ENCODE measurements at regions of chr2 and their contacts with region 1.

Region 1: DNA sequence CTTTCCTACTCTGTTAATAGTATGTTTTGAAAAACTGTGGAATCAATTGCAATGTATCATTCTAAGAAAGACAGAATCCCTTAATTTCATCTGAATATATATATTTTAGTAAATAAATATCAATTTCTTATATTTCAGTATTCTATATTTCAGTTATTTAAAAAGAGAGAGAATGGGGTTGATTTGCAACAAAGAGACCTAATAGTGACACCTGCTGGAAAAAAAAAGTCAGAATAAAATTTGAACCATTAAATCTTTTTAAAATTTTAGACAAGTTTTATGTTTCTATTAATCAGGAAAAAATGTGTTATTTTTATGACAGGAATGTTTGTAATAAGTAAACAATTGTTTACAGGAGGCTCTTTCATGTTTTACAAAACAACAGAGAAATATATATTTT is 20.7 kb upstream of the CCNT2 start:
- DNase-seq: no peak
- ATAC-seq: no peak
- H3K4me3 ChIP-seq: no peak overlapping the region
- H3K27ac ChIP-seq: no peak overlapping the region
- H3K4me1 ChIP-seq: no peaks in the 10 kb centered on the region
- H3K27me3 ChIP-seq: no peaks in the 10 kb centered on the region

Region 2: GRCh38 chr2:134457765-134458472 is 440.0 kb before region 1 on chr2:
- intact Hi-C with region 1: loop called in 1 of 2 experiments (anchors 10 kb)
- DNase-seq: peak in 1 of 2 donors; percentile 9
- ATAC-seq: no peak
- H3K4me3 ChIP-seq: no peak overlapping the region
- H3K27ac ChIP-seq: no peak overlapping the region
- H3K4me1 ChIP-seq: no peaks in the 10 kb centered on the region
- H3K27me3 ChIP-seq: no peaks in the 10 kb centered on the region

Region 3: GRCh38 chr2:134943540-134943939 is 45.6 kb after region 1 on chr2:
- intact Hi-C with region 1: no loop called
- DNase-seq: no peak
- ATAC-seq: no peak
- H3K4me3 ChIP-seq: no peak overlapping the region
- H3K27ac ChIP-seq: no peak overlapping the region
- H3K4me1 ChIP-seq: peaks cover 0 to 1% of the 10 kb centered on the region in 2 donors
- H3K27me3 ChIP-seq: no peaks in the 10 kb centered on the region

Region 4: GRCh38 chr2:134988994-134989605 is 91.2 kb after region 1 on chr2:
- intact Hi-C with region 1: no loop called
- DNase-seq: no peak
- ATAC-seq: no peak
- H3K4me3 ChIP-seq: no peak overlapping the region
- H3K27ac ChIP-seq: no peak overlapping the region
- H3K4me1 ChIP-seq: no peaks in the 10 kb centered on the region
- H3K27me3 ChIP-seq: no peaks in the 10 kb centered on the region

Region 5: DNA sequence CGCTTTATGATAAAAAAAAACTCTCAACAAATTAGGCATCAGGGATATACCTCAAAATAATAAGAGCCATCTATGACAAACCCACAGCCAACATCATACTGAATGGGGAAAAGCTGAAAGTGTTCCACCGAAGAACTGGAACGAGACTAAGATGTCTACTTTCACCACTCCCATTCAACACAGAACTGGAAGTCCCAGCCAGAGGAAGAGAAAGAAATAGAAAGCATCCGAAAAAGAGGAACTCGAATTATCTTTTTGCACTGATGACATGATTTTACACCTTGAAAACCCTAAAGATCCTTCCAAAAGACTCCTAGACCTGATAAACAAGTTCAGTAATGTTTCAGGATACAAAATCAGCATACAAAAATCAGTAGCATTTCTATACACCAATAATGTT is 511.5 kb after region 1 on chr2:
- intact Hi-C with region 1: no loop called
- DNase-seq: no peak
- ATAC-seq: no peak
- H3K4me3 ChIP-seq: no peak overlapping the region
- H3K27ac ChIP-seq: no peak overlapping the region
- H3K4me1 ChIP-seq: no peaks in the 10 kb centered on the region
- H3K27me3 ChIP-seq: no peaks in the 10 kb centered on the region

Measured in aorta (tissue), 5 donors.